ENCODE measurements at regions of chr6 and their contacts with region 1.

Region 1: DNA sequence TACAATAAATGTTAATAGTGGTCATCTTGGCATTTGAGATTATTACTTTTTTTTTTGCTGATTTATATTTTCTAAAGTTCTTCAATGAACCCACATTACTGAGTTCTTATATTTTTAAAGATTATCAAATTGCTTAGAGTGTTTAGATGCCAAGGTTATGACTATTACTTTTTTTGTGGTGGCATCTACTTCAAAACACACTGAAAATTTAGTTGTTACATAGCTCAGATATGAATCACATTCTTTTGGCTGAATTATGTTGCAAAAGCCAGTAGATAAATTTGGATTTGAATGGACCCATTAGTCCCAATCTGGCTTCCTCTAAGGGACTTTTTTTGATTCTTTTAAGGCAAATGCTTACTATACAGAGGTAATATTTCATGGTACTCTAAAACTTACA is 8.9 kb downstream of the UTRN start:
- DNase-seq: no peak
- H3K4me3 ChIP-seq: no peak overlapping the region
- H3K27ac ChIP-seq: no peak overlapping the region
- H3K4me1 ChIP-seq: peaks cover 50% of the 10 kb centered on the region
- H3K27me3 ChIP-seq: no peaks in the 10 kb centered on the region
- CTCF ChIP-seq: no peak

Region 2: DNA sequence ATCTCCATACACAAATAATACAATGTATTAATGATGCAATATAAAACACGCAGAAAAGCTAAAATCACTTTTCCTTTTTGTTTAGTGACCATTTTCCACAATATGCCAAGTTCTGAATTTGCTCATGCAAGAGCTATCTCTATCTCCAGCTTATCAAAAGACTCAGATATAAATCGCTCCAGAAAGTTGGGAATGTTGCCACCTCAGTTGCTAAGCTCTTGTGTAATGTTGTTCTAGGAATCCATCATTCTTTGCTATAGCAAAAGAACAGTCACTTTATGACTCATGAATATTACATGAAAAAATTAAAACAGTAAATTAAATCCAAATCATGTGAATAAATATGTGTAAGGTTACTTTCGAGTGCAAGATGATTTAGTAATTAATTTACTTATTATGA is 294.6 kb before region 1 on chr6:
- intact Hi-C with region 1: no loop called
- DNase-seq: no peak
- H3K4me3 ChIP-seq: no peak overlapping the region
- H3K27ac ChIP-seq: no peak overlapping the region
- H3K4me1 ChIP-seq: no peaks in the 10 kb centered on the region
- H3K27me3 ChIP-seq: no peaks in the 10 kb centered on the region
- CTCF ChIP-seq: no peak

Region 3: DNA sequence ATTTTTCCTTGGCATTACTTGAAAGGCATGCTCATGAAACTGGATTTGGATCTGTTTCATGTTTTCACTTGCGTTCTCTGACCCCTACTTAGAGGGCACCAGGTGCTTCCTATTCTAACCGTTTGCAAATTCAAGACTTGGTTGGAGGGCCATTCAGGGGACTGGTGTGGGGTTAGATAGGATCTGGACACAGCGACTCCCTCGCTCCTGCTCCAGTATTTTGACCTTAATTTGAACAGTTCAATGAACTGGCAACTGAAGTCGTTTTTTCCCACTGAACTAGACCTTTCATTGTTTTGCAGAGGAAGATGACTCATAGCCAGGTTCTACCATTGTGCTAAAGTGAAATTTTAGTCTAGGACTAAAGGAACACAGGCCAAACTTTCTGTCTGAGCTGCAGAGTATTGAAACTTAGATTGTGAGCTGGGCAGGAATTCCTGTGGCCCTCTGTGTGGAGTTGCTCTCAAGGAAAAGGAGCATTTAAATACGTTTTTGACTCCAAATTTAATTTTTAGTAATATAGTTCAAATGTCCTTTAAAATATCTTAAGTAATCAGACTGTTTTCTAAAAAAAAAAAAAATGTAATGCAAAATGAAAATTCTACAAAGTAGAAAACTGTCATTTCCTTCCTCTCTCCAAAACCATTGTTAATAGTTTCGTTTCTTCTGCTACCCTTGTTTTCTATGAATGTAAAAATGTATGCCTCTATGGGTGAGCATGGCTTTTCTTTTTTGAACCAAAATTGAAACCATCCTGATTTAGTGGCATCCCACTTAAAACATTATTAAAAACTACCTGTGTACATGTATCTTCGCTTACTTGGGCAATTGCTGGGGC is 55.9 kb after region 1 on chr6:
- intact Hi-C with region 1: loop called (anchors 10 kb)
- DNase-seq: no peak
- H3K4me3 ChIP-seq: peak overlapping the region; percentile 39
- H3K27ac ChIP-seq: peak overlapping the region; percentile 63
- H3K4me1 ChIP-seq: peaks cover 98% of the 10 kb centered on the region
- H3K27me3 ChIP-seq: no peaks in the 10 kb centered on the region
- CTCF ChIP-seq: no peak

Region 4: DNA sequence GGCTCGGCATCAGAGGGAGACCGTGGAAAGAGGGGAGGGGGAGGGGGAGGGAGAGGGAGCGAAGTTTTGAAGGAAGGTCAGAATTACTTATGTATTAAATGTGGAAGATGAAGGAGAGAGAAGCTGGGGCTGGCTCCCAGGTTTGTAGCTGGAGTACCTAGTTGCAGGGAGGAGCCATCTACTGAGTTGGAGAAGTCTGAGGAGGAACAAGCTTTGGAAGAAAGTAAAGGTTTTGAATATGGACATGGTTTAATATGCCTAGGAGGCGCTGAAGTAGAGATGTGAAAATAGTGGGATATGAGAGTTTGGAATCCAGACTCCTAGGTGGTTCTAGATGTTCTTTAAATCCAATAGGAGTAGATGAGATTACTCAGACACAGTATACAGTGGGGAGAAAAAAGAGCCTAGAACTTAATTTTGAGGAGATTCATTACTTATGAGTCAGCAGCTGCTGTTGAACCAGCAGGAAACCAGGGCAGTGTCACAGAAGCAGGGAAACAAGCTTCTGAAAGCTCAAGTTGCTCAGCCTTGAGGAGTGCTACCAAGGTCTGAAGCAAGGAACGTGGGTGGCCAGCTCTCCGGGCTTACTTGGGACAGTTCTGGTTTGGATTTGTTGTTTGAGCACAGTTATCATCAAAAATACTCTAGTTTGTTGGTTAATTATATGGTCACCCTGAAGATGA is 140.4 kb after region 1 on chr6:
- intact Hi-C with region 1: loop called (anchors 10 kb)
- DNase-seq: no peak
- H3K4me3 ChIP-seq: no peak overlapping the region
- H3K27ac ChIP-seq: peak overlapping the region; percentile 51
- H3K4me1 ChIP-seq: peaks cover 34% of the 10 kb centered on the region
- H3K27me3 ChIP-seq: no peaks in the 10 kb centered on the region
- CTCF ChIP-seq: no peak